Activated T-helper 2 cell treated with anti-CD3 and anti-CD28 coated beads, Interferon-gamma antibody, Interleukin-2, Interleukin-4, amounts not matched to agents 10 μg/mL and 5 μg/mL and 100 μg/mL, durations not matched to agents 14 hours and 24 hours and 36 hours (primary cell): ENCODE measurements at regions of chr2 and their contacts with region 1.

Region 1: DNA sequence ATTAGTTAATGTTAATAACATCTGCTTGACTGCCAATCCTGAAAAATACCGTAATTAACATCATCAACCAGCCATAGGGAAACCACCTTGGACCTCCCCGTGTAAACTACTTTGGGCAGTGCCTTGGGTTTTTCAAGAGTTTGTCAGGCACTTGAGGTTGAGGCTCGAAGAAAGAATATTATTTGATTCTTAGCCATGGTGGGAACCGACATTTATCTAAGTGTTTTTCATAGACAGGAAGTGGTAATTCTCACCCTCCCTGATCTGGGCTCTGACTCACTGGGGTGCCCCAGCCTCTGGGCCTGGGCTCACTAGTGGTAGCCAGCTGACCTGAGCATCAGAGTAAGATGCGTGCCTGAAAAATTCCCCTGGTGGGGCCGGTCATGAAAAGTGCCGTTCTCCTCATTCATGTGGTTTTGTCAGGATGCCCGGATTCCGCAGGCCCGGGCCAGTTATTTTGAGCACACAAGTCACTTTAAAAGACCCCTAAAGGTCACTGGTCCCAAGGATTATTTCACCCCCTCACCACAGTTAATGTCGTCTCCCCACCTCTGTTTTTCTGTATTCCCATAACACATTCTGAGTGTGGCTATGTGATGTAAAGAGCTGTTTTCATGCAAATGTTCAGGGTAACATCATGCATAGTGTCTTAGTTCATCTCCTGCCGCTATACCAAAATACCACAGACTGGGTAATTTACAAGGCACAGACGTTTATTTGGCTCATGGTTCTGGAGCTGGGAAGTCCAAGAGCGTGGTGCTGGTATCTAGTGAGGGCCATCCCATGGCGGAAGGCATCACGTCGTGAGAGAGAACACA is 21.6 kb upstream of the SPATA3 start:
- DNase-seq: peak; percentile 57
- H3K4me3 Mint-ChIP-seq: peak overlapping the region; percentile 40
- H3K27ac Mint-ChIP-seq: peak overlapping the region; percentile 89
- H3K4me1 Mint-ChIP-seq: peaks cover 54% of the 10 kb centered on the region
- H3K27me3 Mint-ChIP-seq: peaks cover 33% of the 10 kb centered on the region

Region 2: GRCh38 chr2:230485801-230486341 is 488.4 kb before region 1 on chr2:
- intact Hi-C with region 1: no loop called
- DNase-seq: no peak
- H3K4me3 Mint-ChIP-seq: no peak overlapping the region
- H3K27ac Mint-ChIP-seq: no peak overlapping the region
- H3K4me1 Mint-ChIP-seq: peaks cover 4% of the 10 kb centered on the region
- H3K27me3 Mint-ChIP-seq: no peaks in the 10 kb centered on the region

Region 3: DNA sequence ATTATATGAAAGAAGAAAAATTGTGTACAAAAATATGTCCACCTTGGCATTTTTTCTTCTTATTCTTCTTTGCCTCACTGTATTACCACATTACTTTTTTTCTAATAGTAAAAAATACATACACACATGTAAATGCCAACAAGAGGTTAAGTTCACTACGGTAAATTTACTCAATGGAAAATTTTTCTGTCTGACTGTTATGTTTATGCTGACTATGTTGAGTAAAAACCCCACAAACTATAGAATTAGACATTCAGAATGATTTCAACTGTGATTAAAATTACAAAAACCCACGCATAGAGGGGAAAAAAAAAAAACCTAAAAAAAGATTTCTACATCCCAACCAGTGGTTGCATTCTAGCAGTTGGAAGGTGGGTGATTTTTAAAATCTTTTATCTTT is 54.6 kb before region 1 on chr2:
- intact Hi-C with region 1: loop called (anchors 1 kb)
- DNase-seq: no peak
- H3K4me3 Mint-ChIP-seq: no peak overlapping the region
- H3K27ac Mint-ChIP-seq: peak overlapping the region; percentile 47
- H3K4me1 Mint-ChIP-seq: peaks cover 54% of the 10 kb centered on the region
- H3K27me3 Mint-ChIP-seq: peaks cover 46% of the 10 kb centered on the region

Region 4: DNA sequence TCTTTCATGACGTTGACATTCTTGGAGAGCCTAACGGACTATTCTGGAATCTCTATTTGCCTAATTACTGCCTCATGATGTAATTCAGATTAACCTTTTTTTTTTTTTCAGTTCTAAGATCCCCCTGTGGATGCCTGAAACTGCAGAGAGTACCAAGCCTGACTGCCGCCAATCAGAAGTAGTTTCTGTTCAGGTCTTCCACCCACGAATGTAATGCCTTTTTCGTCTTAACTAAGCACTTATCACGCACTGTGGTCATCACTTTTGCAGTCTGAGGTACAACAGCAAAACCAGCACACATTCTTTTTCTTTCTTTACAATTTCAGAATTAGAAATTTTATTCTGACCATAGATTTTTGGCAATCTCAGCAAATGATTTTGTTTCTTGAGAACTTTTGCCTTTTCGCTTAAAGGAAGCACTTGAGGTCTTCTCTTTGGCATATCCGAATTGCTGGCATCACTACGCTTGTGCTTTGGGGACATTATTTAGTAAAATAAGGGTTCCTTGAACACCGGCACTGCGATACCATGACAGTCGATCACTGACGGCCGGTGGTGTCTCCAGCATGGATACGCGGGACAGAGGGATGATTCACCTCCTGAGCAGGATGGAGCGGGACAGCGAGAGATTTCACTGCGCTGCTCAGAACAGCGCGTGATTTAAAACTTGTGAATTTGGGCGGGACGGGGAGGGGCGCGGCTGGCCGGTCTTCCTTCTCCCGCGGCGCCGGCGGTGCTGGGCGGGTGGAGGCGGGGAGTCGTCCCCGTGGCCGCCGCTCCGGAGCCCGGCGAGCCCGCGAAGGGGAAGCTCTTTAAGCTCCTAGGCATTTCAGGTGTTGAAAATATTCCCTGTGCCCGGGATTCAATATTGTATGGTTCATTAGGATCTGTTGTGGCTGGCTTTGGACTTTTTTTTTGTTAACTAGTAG is 17.2 kb before region 1 on chr2:
- intact Hi-C with region 1: loop called (anchors 1 kb)
- DNase-seq: no peak
- H3K4me3 Mint-ChIP-seq: peak overlapping the region; percentile 86
- H3K27ac Mint-ChIP-seq: peak overlapping the region; percentile 85
- H3K4me1 Mint-ChIP-seq: peaks cover 42% of the 10 kb centered on the region
- H3K27me3 Mint-ChIP-seq: peaks cover 71% of the 10 kb centered on the region

Region 5: DNA sequence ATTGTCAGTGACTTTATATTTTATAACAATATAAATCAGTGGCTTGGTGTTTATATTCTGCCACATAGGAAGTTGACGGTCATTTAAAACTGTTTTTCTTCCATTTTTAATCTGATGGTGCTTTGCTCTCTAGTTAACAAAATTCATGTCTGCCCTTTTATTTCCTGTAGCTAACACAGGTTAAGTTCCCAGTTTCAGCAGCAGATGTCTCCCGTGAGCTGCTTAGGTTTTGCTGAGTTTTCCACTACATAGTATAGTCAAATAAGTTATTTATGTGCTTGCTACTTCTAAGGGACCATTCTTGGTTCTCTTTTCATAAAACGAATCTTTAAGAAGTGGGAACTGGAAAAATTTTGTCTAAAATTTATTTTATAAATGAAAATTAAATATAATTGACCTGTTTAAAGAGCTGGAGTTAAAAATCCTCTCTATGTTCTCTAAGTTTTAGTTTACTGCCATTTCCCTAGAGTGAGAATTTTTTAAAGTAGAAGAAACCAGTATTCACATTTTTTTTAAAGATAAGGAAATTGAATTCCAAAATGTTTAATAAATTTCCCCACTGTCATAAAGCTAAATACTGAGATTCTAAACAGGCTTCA is 129.9 kb after region 1 on chr2:
- intact Hi-C with region 1: no loop called
- DNase-seq: peak; percentile 41
- H3K4me3 Mint-ChIP-seq: no peak overlapping the region
- H3K27ac Mint-ChIP-seq: peak overlapping the region; percentile 53
- H3K4me1 Mint-ChIP-seq: peaks cover 18% of the 10 kb centered on the region
- H3K27me3 Mint-ChIP-seq: no peaks in the 10 kb centered on the region